ENCODE measurements at regions of chr10 and their contacts with region 1.

Region 1: DNA sequence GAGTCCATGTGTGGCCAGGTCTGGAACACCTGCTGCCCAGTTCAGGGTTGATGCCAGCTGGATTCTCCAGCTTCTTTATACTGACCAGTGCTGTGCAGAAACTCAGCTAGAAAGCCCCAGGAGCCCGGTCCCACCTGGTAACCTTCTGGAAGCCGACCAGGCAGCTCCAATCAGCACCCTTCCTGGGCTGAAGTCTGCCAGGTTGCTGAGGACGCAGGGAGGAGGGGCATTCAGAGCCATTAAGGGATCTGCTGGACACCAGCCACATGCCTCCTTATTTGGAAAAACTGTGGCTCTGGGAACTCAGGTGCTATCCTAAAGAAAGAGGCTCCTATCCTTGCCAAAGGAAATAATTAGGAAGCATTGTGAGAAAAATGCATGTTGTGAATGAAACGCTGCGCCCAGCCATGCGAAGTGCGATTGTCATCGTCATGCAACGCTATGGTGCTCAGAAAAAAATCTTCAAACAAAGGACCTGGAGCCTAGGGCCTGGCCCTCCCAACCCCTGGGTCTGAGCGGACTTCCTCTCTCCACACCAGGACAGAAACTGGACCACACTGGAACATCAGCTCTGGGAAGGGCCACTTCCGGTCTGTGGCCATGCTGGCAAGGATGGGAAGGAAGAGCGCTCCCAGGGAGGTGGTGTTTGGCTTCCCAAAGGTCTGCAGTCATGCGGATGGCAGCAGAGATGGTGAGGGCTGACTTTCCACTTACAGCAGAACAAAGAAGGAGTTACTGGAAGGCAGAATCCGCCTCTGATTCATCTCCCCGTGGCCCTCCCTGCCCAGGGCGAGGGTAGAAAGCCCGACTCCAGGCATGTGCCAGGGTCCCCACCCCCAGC is 90.1 kb downstream of the FAM53B start:
- DNase-seq: no peak
- ATAC-seq: no peak
- H3K4me3 ChIP-seq: no peak overlapping the region
- H3K4me3 Mint-ChIP-seq: no peak overlapping the region
- H3K27ac ChIP-seq: peak overlapping the region; percentile 27 to 35
- H3K27ac Mint-ChIP-seq: peak overlapping the region; percentile 89
- H3K4me1 ChIP-seq: peaks cover 95% of the 10 kb centered on the region
- H3K4me1 Mint-ChIP-seq: peaks cover 92% of the 10 kb centered on the region
- H3K27me3 ChIP-seq: no peaks in the 10 kb centered on the region
- H3K27me3 Mint-ChIP-seq: no peaks in the 10 kb centered on the region
- CTCF ChIP-seq: no peak

Region 2: DNA sequence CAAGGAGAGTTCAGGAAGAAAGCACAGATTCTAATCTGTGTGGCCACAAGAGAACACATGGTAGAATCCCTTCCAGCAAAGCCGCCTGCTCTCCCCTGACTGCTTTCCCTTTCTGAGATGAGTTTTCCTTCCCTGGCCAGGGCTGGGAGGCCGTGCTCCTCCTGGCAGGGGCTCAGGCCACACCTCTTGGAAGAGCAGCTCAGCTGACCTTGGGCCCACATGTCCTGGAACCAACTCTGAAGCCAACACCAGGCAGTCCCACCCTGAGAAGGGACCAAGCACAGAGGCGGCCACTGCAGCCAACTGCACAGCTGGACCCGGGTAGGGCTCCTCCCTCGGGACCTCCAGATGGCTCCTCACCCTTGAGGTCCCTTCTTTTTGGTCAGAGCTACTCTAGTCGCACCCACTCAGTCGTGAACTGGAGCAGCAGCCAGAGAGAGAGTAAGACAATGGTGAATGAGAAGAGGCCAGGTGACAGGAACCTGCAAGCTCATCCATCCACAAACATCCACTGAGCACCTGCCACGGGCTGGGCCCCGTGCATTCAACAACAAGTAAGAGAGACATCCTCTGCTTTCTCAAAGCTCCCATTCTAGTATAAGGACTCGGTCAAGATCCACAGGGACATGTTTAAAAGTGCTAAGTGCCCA is 49.9 kb after region 1 on chr10:
- CTCF ChIA-PET with region 1: interaction called, 4 read pairs
- POLR2A ChIA-PET with region 1: interaction called, 5 read pairs
- intact Hi-C with region 1: loop called in 1 of 2 experiments (anchors 2 kb)
- DNase-seq: peak in 1 of 14 experiments; percentile 35
- ATAC-seq: no peak
- H3K4me3 ChIP-seq: no peak overlapping the region
- H3K4me3 Mint-ChIP-seq: peak overlapping the region; percentile 46
- H3K27ac ChIP-seq: peak overlapping the region; percentile 24 to 71
- H3K27ac Mint-ChIP-seq: peak overlapping the region; percentile 91
- H3K4me1 ChIP-seq: peaks cover 100% of the 10 kb centered on the region
- H3K4me1 Mint-ChIP-seq: peaks cover 99% of the 10 kb centered on the region
- H3K27me3 ChIP-seq: no peaks in the 10 kb centered on the region
- H3K27me3 Mint-ChIP-seq: no peaks in the 10 kb centered on the region
- CTCF ChIP-seq: no peak

Measured in CD4-positive, alpha-beta T cell (primary cell).